ENCODE measurements at regions of chr3 and their contacts with region 1.

Region 1: GRCh38 chr3:149717391-149718056 is 34.8 kb downstream of the COMMD2 start:
- DNase-seq: peak; percentile 61 to 64
- H3K4me3 ChIP-seq: no peak overlapping the region
- H3K4me3 Mint-ChIP-seq: no peak overlapping the region
- H3K27ac Mint-ChIP-seq: no peak overlapping the region
- H3K4me1 ChIP-seq: no peaks in the 10 kb centered on the region
- H3K4me1 Mint-ChIP-seq: no peaks in the 10 kb centered on the region
- H3K27me3 ChIP-seq: no peaks in the 10 kb centered on the region
- H3K27me3 Mint-ChIP-seq: no peaks in the 10 kb centered on the region
- CTCF ChIP-seq: peak; percentile 55 to 69

Region 2: GRCh38 chr3:149494022-149494758 is 223.3 kb before region 1 on chr3:
- CTCF ChIA-PET with region 1: no interaction called
- POLR2A ChIA-PET with region 1: no interaction called
- intact Hi-C with region 1: loop called (anchors 1 kb)
- DNase-seq: peak; percentile 53 to 76
- H3K4me3 ChIP-seq: no peak overlapping the region
- H3K4me3 Mint-ChIP-seq: no peak overlapping the region
- H3K27ac Mint-ChIP-seq: no peak overlapping the region
- H3K4me1 ChIP-seq: no peaks in the 10 kb centered on the region
- H3K4me1 Mint-ChIP-seq: no peaks in the 10 kb centered on the region
- H3K27me3 ChIP-seq: no peaks in the 10 kb centered on the region
- H3K27me3 Mint-ChIP-seq: no peaks in the 10 kb centered on the region
- CTCF ChIP-seq: peak; percentile 65 to 71

Region 3: DNA sequence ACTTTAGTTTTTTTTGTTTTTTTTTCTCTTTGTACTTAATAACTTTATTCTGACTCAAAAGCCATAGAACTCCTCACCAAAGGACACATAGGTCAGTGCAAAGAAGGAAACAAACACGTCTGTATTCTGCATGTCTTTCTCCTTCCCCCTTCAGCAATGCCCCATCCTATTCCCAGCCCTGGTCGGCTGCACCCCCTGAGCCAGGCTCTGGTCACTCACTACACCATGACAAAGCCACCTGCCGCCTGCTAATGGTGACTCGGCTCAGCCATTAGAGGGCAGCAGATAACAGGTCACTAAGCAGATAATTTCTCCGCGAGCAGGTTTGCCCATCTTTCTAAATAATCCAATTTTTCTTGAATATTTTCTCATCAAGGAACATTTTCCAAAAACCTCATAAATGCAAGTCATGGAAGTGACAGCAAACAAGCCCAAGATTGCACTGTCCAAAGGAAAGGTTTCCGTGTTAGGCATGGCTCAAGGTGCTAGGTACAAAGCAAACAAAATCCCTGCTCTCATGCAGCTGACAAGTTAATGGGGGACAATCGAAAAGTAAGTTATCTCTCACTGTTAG is 205.2 kb before region 1 on chr3:
- CTCF ChIA-PET with region 1: interaction called, 4 read pairs
- POLR2A ChIA-PET with region 1: no interaction called
- intact Hi-C with region 1: loop called (anchors 1 kb)
- DNase-seq: peak; percentile 70 to 76
- H3K4me3 ChIP-seq: no peak overlapping the region
- H3K4me3 Mint-ChIP-seq: peak overlapping the region; percentile 17
- H3K27ac Mint-ChIP-seq: peak overlapping the region; percentile 22
- H3K4me1 ChIP-seq: peaks cover 23% of the 10 kb centered on the region
- H3K4me1 Mint-ChIP-seq: peaks cover 19% of the 10 kb centered on the region
- H3K27me3 ChIP-seq: no peaks in the 10 kb centered on the region
- H3K27me3 Mint-ChIP-seq: no peaks in the 10 kb centered on the region
- CTCF ChIP-seq: peak; percentile 75 to 86

Region 4: DNA sequence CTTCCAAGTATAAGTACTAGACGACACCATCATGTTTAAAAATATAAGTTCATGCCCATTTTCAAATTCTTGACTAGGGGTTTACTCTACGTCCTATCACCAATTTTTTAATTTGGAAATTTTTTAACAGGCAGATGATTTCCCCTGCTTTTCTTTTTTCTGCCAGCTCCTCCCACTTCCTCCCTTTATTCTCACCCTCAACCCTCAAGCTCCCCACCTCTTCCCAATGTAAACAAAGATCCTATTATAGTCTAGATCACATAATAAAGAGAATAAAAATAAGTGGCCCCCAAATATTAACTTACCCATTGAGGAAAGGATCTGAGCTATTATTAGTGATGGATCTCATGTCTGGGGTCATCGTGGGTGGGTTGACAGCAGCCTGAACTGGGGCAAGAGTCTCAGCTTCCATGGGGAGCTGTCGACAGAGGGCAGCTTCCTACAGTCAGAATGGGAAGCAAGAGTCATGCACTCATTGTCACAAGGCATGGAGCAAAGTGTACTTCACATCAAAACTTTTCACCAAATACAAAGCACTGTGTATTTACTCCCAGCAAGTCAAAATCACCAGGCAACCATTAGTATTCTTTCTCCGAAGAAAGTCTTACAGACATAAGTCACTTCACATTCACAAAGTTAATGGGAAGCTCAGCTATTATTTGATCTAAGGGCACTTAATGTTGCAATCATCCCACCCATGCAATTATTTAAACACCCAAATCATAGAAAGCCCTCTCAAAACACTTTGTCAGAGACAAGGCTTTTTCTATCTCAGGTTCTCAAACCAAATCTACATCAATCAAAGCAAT is 189.8 kb before region 1 on chr3:
- CTCF ChIA-PET with region 1: interaction called, 4 read pairs
- POLR2A ChIA-PET with region 1: no interaction called
- intact Hi-C with region 1: loop called (anchors 1 kb)
- DNase-seq: no peak
- H3K4me3 ChIP-seq: no peak overlapping the region
- H3K4me3 Mint-ChIP-seq: no peak overlapping the region
- H3K27ac Mint-ChIP-seq: no peak overlapping the region
- H3K4me1 ChIP-seq: no peaks in the 10 kb centered on the region
- H3K4me1 Mint-ChIP-seq: no peaks in the 10 kb centered on the region
- H3K27me3 ChIP-seq: no peaks in the 10 kb centered on the region
- H3K27me3 Mint-ChIP-seq: no peaks in the 10 kb centered on the region
- CTCF ChIP-seq: peak in 1 of 2 experiments; percentile 13

Region 5: DNA sequence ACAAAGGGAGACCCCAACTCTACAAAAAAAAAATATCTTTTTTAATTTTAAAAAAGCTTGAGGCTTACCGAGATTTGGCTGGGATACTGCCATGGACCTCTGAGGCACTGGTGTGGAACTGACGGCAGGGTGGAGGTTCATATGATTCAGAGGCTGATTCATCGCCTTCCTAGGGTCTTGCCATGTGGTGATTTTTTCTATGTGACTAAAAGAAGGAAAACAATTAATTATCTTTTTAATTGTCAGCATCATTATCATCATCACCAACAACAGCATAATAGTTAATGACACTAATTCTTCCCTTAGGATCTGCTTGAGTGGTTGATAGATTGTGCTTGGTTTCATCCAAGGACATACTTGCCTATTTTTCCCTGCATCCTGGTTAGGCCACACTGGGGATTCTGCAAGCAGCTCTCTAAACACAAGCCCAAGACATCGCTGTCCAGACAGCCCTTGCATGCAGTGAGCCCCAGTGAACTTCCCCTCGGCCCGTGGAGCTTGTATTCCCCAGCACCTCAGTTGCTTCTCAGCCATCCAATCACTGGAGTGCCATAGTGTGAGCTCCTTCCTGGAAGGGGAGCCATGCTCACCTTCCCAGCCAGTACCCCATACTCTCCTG is 144.6 kb before region 1 on chr3:
- CTCF ChIA-PET with region 1: interaction called, 5 read pairs
- POLR2A ChIA-PET with region 1: no interaction called
- intact Hi-C with region 1: loop called (anchors 1 kb)
- DNase-seq: no peak
- H3K4me3 ChIP-seq: no peak overlapping the region
- H3K4me3 Mint-ChIP-seq: no peak overlapping the region
- H3K27ac Mint-ChIP-seq: no peak overlapping the region
- H3K4me1 ChIP-seq: no peaks in the 10 kb centered on the region
- H3K4me1 Mint-ChIP-seq: peaks cover 4% of the 10 kb centered on the region
- H3K27me3 ChIP-seq: no peaks in the 10 kb centered on the region
- H3K27me3 Mint-ChIP-seq: no peaks in the 10 kb centered on the region
- CTCF ChIP-seq: no peak

Region 6: DNA sequence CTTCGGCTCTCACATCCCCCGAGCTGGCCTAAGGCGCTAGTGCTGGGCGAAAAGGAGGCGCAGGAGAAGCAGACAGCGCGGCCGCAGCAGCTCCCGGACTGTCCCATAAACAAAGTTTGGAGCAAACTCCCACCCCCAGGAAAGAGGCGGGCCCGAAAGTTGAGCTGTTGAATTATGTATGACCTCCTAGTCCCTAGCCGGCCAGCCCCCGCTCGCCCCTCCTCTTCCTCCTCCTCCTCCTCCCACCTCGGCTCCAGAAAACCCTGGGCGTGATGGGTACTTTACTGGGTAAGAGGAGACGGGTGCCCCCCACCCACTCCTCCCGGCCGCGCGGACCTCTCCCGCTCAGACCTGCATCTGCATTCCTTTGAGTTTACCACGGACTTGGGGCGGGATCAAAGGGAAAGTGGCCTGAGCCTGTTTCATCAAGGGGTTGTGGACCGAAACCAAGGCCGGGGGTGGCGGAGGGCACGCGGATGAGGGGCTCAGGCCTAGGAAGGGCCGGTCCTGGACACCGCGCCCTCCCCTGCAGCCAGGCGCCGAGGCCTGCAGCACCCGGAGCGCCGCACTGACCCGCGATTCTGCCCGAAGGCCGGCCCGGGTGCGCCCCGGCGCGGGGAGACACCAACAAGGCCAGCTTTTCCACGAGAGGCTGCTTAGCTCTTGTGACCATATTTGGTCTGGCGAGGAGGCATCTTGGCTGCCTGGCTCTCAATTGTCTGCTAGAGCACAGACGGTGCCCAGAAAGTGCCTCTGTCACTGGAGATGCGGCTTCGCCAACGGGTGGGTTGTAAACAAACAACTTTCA is 59.4 kb before region 1 on chr3 and contains the start of gene WWTR1:
- CTCF ChIA-PET with region 1: no interaction called
- POLR2A ChIA-PET with region 1: no interaction called
- intact Hi-C with region 1: loop called (anchors 2 kb)
- DNase-seq: peak; percentile 80 to 87
- H3K4me3 ChIP-seq: peak within 1 kb of the TSS; percentile 37
- H3K4me3 Mint-ChIP-seq: peak within 1 kb of the TSS; percentile 78
- H3K27ac Mint-ChIP-seq: peak within 1 kb of the TSS; percentile 87
- H3K4me1 ChIP-seq: peaks cover 14% of the 10 kb centered on the region
- H3K4me1 Mint-ChIP-seq: peaks cover 17% of the 10 kb centered on the region
- H3K27me3 ChIP-seq: no peaks in the 10 kb centered on the region; the same call in 1 of the 2 replicates
- H3K27me3 Mint-ChIP-seq: no peaks in the 10 kb centered on the region
- CTCF ChIP-seq: no peak
- total RNA-seq, gene WWTR1: 16.2 and 19.1 TPM in 2 replicates

Measured in Caco-2 (cell line).